A549 (cell line): ENCODE measurements at regions of chr10 and their contacts with region 1.

Region 1: GRCh38 chr10:116796910-116797513 is 52.3 kb upstream of the ENO4 start:
- DNase-seq: peak; percentile 72 to 78
- ATAC-seq: peak; percentile 90 to 99
- H3K4me3 ChIP-seq: no peak overlapping the region
- H3K27ac ChIP-seq: no peak overlapping the region
- H3K4me1 ChIP-seq: no peaks in the 10 kb centered on the region
- CTCF ChIP-seq: peak; percentile 93
- EP300 ChIP-seq: no peak
- POLR2A ChIP-seq: no peak
- RAD21 ChIP-seq: peak; percentile 96 to 98

Region 2: DNA sequence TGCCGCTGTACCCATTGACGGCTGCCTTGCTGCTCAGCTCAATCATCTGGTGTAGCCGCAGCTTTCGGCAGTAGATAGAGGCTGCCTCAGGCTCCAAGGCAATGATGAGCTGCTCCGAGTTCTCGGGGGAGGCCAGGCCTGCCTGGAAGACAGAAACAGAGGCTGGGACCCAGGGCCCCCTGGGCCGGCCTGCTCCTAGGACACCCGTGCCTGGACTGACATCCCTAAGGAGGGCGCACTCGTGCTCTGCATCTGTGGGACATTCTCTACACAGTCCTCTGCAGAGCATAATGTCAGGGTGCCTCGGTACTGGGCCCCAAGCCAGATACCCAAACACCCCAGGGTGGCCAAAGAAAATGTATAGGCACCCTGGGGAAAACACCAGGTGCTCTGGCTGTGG is 113.2 kb before region 1 on chr10:
- CTCF ChIA-PET with region 1: interaction called, 277 read pairs
- POLR2A ChIA-PET with region 1: no interaction called
- DNase-seq: no peak
- ATAC-seq: no peak; a peak in 1 of 6 replicates
- H3K4me3 ChIP-seq: no peak overlapping the region
- H3K27ac ChIP-seq: no peak overlapping the region
- H3K4me1 ChIP-seq: no peaks in the 10 kb centered on the region
- CTCF ChIP-seq: no peak
- EP300 ChIP-seq: no peak
- POLR2A ChIP-seq: no peak
- RAD21 ChIP-seq: no peak

Region 3: GRCh38 chr10:116779076-116779687 is 17.8 kb before region 1 on chr10:
- CTCF ChIA-PET with region 1: interaction called, 15 read pairs
- POLR2A ChIA-PET with region 1: no interaction called
- DNase-seq: no peak
- ATAC-seq: no peak
- H3K4me3 ChIP-seq: no peak overlapping the region
- H3K27ac ChIP-seq: peak overlapping the region in 1 of 2 experiments; percentile 31; a peak in 1 of 6 replicates
- H3K4me1 ChIP-seq: peaks cover 11% of the 10 kb centered on the region
- CTCF ChIP-seq: no peak
- EP300 ChIP-seq: no peak
- POLR2A ChIP-seq: no peak
- RAD21 ChIP-seq: no peak

Region 4: GRCh38 chr10:116849248-116850057 is 52.4 kb after region 1 on chr10 and contains the start of gene ENO4:
- CTCF ChIA-PET with region 1: interaction called, 10 read pairs
- POLR2A ChIA-PET with region 1: no interaction called
- DNase-seq: peak; percentile 89
- ATAC-seq: peak; percentile 94
- H3K4me3 ChIP-seq: peak within 1 kb of the TSS; percentile 82
- H3K27ac ChIP-seq: peak within 1 kb of the TSS; percentile 85 to 94
- H3K4me1 ChIP-seq: peaks cover 14% of the 10 kb centered on the region
- CTCF ChIP-seq: no peak
- EP300 ChIP-seq: no peak
- POLR2A ChIP-seq: peak; percentile 63
- RAD21 ChIP-seq: no peak
- polyA plus RNA-seq, gene ENO4: 0.47 and 0.60 TPM in 2 replicates